Heart right ventricle (tissue), 16 donors: ENCODE measurements at regions of chr4 and their contacts with region 1.

Region 1: GRCh38 chr4:14841801-14842768 is 160.2 kb upstream of the CPEB2 start:
- DNase-seq: peak; percentile 28 to 54
- ATAC-seq: peak; percentile 78 to 99 (median 93)
- H3K4me3 ChIP-seq: peak overlapping the region in 1 of 10 donors; percentile 7
- H3K27ac ChIP-seq: peak overlapping the region in 9 of 10 donors; percentile 29 to 81 (median 74)
- H3K4me1 ChIP-seq: peaks cover 0 to 24% (median 19%) of the 10 kb centered on the region in 9 donors
- H3K27me3 ChIP-seq: no peaks in the 10 kb centered on the region
- CTCF ChIP-seq: no peak

Region 2: GRCh38 chr4:14924812-14925344 is 82.8 kb after region 1 on chr4:
- intact Hi-C with region 1: loop called in 2 of 10 experiments (anchors 2 to 5 kb)
- DNase-seq: no peak
- ATAC-seq: no peak
- H3K4me3 ChIP-seq: no peak overlapping the region
- H3K27ac ChIP-seq: no peak overlapping the region
- H3K4me1 ChIP-seq: peaks cover 0 to 5% (median 0%) of the 10 kb centered on the region in 9 donors
- H3K27me3 ChIP-seq: no peaks in the 10 kb centered on the region
- CTCF ChIP-seq: no peak